SK-N-SH (cell line): ENCODE measurements at regions of chr6 and their contacts with region 1.

Region 1: GRCh38 chr6:160520043-160520904 is 143.8 kb downstream of the LPA start:
- DNase-seq: peak; percentile 79
- H3K4me3 ChIP-seq: peak overlapping the region; percentile 55 to 78
- H3K27ac ChIP-seq: no peak overlapping the region
- H3K4me1 ChIP-seq: peaks cover 0 to 2% of the 10 kb centered on the region in 2 experiments; a peak in 1 of 4 replicates
- H3K27me3 ChIP-seq: no peaks in the 10 kb centered on the region; the same call in 1 of the 2 replicates
- CTCF ChIP-seq: 0 out of 2 replicates have a peak, but pooled peaks have one; percentile 97
- EP300 ChIP-seq: no peak
- RAD21 ChIP-seq: peak; percentile 71

Region 2: DNA sequence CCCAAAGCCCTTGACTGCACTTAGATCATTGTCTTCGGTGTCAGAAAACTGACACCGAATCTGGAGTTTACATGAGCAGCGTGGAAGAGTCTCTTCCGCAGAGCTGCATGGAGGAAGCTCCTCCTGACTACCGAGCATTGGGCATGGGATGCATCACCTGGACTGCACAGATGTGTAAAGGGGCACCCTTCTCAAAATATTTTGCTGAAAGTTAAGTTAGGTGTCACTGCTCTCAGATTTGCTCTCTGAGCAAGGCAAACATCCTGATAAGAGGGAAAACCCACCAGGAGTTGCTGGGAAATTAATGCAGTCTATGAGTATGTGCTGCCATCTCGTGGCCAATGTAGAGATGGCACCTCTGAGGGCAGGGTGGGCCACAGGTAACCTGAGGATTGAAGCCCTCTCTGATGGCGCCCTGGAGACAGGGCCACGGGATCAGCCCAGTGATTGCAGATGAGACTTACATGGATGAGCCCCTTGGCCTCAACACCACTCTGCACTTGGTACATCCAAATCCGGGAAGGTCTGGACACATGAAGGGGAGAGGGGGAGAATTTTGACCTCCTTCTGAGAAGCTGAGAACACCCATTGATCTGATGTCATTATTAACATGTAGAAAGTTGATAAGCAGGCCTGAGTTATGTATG is 13.9 kb after region 1 on chr6:
- CTCF ChIA-PET with region 1: interaction called, 97 read pairs
- POLR2A ChIA-PET with region 1: no interaction called
- DNase-seq: peak; percentile 59
- H3K4me3 ChIP-seq: peak overlapping the region in 1 of 2 experiments; percentile 49; a peak in 1 of 4 replicates
- H3K27ac ChIP-seq: no peak overlapping the region
- H3K4me1 ChIP-seq: no peaks in the 10 kb centered on the region
- H3K27me3 ChIP-seq: peaks cover 11% of the 10 kb centered on the region
- CTCF ChIP-seq: peak; percentile 94
- EP300 ChIP-seq: no peak
- RAD21 ChIP-seq: peak; percentile 78

Region 3: GRCh38 chr6:160667639-160668481 is 147.6 kb after region 1 on chr6:
- CTCF ChIA-PET with region 1: interaction called, 10 read pairs
- POLR2A ChIA-PET with region 1: no interaction called
- DNase-seq: peak; percentile 26
- H3K4me3 ChIP-seq: no peak overlapping the region
- H3K27ac ChIP-seq: no peak overlapping the region
- H3K4me1 ChIP-seq: no peaks in the 10 kb centered on the region
- H3K27me3 ChIP-seq: no peaks in the 10 kb centered on the region
- CTCF ChIP-seq: peak; percentile 48
- EP300 ChIP-seq: no peak
- RAD21 ChIP-seq: peak; percentile 48

Region 4: GRCh38 chr6:160766989-160767660 is 246.9 kb after region 1 on chr6:
- CTCF ChIA-PET with region 1: interaction called, 13 read pairs
- POLR2A ChIA-PET with region 1: no interaction called
- DNase-seq: peak; percentile 84
- H3K4me3 ChIP-seq: peak overlapping the region; percentile 37 to 67
- H3K27ac ChIP-seq: no peak overlapping the region
- H3K4me1 ChIP-seq: no peaks in the 10 kb centered on the region; a peak in 1 of 4 replicates
- H3K27me3 ChIP-seq: no peaks in the 10 kb centered on the region; the same call in 1 of the 2 replicates
- CTCF ChIP-seq: peak; percentile 81
- EP300 ChIP-seq: no peak
- RAD21 ChIP-seq: peak; percentile 61

Region 5: DNA sequence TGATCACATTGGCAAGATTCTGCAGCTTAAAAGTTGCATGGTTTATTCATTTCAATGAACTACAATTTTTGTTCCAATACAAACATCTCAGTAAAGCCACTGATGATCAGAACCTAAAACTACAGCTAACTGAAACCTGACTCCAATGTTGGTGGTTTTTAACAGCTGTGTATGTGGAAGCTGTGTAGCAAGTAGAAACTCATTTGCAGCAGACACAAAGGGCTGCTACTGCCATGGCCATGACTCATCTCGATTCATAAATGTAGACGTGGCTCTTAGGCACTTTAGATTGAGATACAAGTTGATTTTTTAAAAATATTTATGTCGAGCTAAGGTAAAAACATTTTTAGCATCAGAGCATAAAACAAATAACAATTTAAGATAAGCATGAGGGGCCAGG is 451.8 kb after region 1 on chr6:
- CTCF ChIA-PET with region 1: no interaction called
- POLR2A ChIA-PET with region 1: no interaction called
- DNase-seq: no peak
- H3K4me3 ChIP-seq: no peak overlapping the region
- H3K27ac ChIP-seq: no peak overlapping the region
- H3K4me1 ChIP-seq: peaks cover 0 to 14% of the 10 kb centered on the region in 2 experiments; a peak in 2 of 4 replicates
- H3K27me3 ChIP-seq: no peaks in the 10 kb centered on the region
- CTCF ChIP-seq: no peak
- EP300 ChIP-seq: no peak
- RAD21 ChIP-seq: no peak